Transverse colon (tissue), 4 donors: ENCODE measurements at regions of chr19 and their contacts with region 1.

Region 1: DNA sequence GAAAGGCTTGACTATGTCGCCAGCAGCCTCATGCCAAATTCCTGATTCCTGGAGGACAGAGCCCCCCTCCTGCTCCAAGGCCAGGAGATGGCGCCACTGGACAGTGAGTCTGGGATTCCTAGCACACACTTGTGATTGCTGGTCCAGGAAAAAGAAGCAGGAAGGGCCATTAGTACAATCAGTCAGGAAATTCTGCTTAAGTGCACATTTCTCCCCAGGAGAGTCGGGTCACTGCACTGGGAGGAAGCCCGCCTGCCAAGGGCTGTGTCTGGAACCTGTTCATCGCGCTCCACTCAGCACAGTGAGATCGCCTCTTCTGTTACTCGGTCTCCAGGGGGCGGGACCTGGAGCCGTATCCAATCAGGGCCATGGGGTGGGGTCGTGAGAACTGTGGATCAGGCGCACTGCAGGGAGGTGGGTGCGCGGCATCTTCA is 65.1 kb downstream of the ZNF823 start:
- DNase-seq: peak; percentile 70
- H3K4me3 ChIP-seq: peak overlapping the region in 3 of 4 donors; percentile 23 to 47 (median 25)
- H3K27ac ChIP-seq: no peak overlapping the region
- H3K4me1 ChIP-seq: peaks cover 0 to 7% (median 3%) of the 10 kb centered on the region in 4 donors
- H3K27me3 ChIP-seq: peaks cover 5% of the 10 kb centered on the region
- CTCF ChIP-seq: peak; percentile 62 to 66 (median 64)
- EP300 ChIP-seq: no peak
- POLR2A ChIP-seq: no peak

Region 2: GRCh38 chr19:11597202-11598102 is 76.2 kb before region 1 on chr19 and contains the start of gene ZNF627:
- in situ Hi-C with region 1: no loop called
- intact Hi-C with region 1: no loop called
- DNase-seq: peak; percentile 100
- H3K4me3 ChIP-seq: peak within 1 kb of the TSS; percentile 72 to 91 (median 80)
- H3K27ac ChIP-seq: peak within 1 kb of the TSS; percentile 87 to 95 (median 88)
- H3K4me1 ChIP-seq: peaks cover 7 to 27% (median 11%) of the 10 kb centered on the region in 4 donors
- H3K27me3 ChIP-seq: no peaks in the 10 kb centered on the region
- CTCF ChIP-seq: peak; percentile 19 to 65 (median 25)
- EP300 ChIP-seq: no peak
- POLR2A ChIP-seq: peak; percentile 97
- total RNA-seq, gene ZNF627: 0.40 to 10.2 (median 7.0) TPM

Region 3: GRCh38 chr19:11696731-11697130 is 23.1 kb after region 1 on chr19:
- in situ Hi-C with region 1: no loop called
- intact Hi-C with region 1: loop called (anchors 1 kb)
- DNase-seq: no peak
- H3K4me3 ChIP-seq: no peak overlapping the region
- H3K27ac ChIP-seq: no peak overlapping the region
- H3K4me1 ChIP-seq: peaks cover 2 to 12% (median 10%) of the 10 kb centered on the region in 4 donors
- H3K27me3 ChIP-seq: no peaks in the 10 kb centered on the region
- CTCF ChIP-seq: no peak
- EP300 ChIP-seq: no peak
- POLR2A ChIP-seq: no peak

Region 4: GRCh38 chr19:11905928-11906327 is 232.3 kb after region 1 on chr19:
- in situ Hi-C with region 1: no loop called
- intact Hi-C with region 1: no loop called
- DNase-seq: no peak
- H3K4me3 ChIP-seq: no peak overlapping the region
- H3K27ac ChIP-seq: no peak overlapping the region
- H3K4me1 ChIP-seq: no peaks in the 10 kb centered on the region
- H3K27me3 ChIP-seq: no peaks in the 10 kb centered on the region
- CTCF ChIP-seq: no peak
- EP300 ChIP-seq: no peak
- POLR2A ChIP-seq: no peak

Region 5: DNA sequence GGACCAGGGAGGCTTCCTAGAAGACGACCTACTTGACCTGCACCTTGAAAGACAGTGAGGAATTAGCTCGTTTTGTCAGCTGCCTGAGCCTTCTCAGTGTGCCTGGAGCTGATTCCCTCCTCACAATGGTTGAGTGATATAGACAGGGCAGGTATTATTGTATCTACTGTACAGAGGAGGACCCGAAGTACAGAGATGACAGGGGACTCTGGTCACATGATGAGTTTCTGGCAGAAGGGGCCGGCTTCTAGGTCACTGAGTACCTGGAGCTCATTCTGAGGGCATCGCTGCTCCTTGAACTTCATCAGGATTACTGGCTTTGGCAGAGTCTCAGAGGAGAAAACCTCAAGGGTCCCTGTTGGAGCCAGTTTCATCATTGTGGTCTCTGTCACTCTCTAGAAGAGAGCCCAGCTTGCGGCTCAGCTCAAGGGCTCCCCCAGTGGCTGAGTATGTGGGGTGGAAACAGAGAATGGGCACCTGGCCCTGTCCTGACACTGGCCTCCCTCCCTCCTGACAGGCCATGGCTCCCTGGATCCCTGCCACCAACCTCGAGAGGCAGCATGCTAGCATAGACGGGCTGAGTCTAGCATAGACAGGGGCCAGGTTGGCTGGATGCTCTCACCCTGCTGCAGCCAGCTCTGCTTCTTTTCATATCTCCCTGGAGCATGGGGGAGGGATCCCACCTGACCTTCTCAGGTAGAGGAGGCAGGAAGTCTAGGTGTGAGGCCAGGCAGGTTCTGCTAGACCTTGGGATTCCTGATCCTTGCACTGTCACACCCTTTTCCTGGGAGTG is 1360.4 kb after region 1 on chr19:
- in situ Hi-C with region 1: no loop called
- intact Hi-C with region 1: no loop called
- DNase-seq: peak; percentile 88
- H3K4me3 ChIP-seq: no peak overlapping the region
- H3K27ac ChIP-seq: peak overlapping the region; percentile 79 to 87 (median 80)
- H3K4me1 ChIP-seq: peaks cover 68 to 99% (median 79%) of the 10 kb centered on the region in 4 donors
- H3K27me3 ChIP-seq: no peaks in the 10 kb centered on the region
- CTCF ChIP-seq: peak; percentile 76 to 95 (median 84)
- EP300 ChIP-seq: peak; percentile 29
- POLR2A ChIP-seq: peak; percentile 52